ENCODE measurements at regions of chr10 and their contacts with region 1.

Region 1: GRCh38 chr10:112461029-112461887 is 14.2 kb downstream of the VTI1A start:
- DNase-seq: peak; percentile 80
- ATAC-seq: peak; percentile 83
- H3K4me3 Mint-ChIP-seq: no peak overlapping the region
- H3K27ac Mint-ChIP-seq: peak overlapping the region; percentile 96
- H3K4me1 Mint-ChIP-seq: peaks cover 37% of the 10 kb centered on the region
- H3K27me3 Mint-ChIP-seq: no peaks in the 10 kb centered on the region
- CTCF ChIP-seq: no peak

Region 2: DNA sequence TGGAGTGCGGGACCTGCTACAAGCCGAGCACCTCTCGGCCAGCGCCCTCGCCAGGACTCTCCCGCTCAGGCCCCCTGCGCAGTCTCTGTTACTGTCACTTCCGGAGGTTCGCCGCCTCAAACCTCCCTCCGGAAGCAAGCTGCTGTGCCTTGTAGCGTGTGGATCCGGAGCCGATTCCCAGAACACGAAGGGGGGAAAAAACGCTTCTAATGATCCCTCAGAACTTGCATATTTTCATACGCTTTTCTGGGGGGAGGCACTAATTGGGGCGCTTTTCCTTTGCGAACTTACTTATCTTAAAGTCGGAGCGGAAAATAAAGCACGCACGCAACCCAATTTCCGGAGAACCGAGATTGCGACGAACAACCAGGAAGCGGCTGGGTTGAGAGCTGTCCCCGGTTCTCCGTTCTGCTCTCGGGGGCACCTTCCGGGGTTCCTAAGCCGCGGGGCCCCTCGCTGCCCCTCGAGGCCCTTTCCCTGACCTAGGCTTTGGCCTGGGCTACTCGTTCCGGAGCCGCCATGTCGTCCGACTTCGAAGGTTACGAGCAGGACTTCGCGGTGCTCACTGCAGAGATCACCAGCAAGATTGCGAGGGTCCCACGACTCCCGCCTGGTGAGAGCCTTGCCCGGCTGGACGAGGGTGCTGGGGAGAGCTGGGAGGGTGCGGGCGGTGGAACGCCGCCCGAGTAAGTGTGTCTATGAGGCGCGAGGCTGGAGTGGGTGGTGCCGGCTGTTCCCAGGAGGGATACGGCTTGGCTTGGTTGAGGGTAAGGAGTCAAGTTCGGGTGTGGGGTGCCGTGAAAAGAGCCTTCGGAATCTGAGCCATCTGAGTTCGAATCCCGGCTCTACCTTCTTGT is 14.2 kb before region 1 on chr10 and contains the starts of genes VTI1A and ZDHHC6:
- CTCF ChIA-PET with region 1: interaction called, 7 read pairs
- POLR2A ChIA-PET with region 1: interaction called, 33 read pairs
- intact Hi-C with region 1: no loop called
- DNase-seq: peak; percentile 89
- ATAC-seq: peak; percentile 93
- H3K4me3 Mint-ChIP-seq: peak within 1 kb of the TSS; percentile 88
- H3K27ac Mint-ChIP-seq: peak within 1 kb of the TSS; percentile 92
- H3K4me1 Mint-ChIP-seq: peaks cover 50% of the 10 kb centered on the region
- H3K27me3 Mint-ChIP-seq: no peaks in the 10 kb centered on the region
- CTCF ChIP-seq: no peak
- total RNA-seq, gene VTI1A: 29.4 to 30.0 TPM
- total RNA-seq, gene ZDHHC6: 36.6 to 37.6 TPM